ENCODE measurements at regions of chr12 and their contacts with region 1.

Region 1: DNA sequence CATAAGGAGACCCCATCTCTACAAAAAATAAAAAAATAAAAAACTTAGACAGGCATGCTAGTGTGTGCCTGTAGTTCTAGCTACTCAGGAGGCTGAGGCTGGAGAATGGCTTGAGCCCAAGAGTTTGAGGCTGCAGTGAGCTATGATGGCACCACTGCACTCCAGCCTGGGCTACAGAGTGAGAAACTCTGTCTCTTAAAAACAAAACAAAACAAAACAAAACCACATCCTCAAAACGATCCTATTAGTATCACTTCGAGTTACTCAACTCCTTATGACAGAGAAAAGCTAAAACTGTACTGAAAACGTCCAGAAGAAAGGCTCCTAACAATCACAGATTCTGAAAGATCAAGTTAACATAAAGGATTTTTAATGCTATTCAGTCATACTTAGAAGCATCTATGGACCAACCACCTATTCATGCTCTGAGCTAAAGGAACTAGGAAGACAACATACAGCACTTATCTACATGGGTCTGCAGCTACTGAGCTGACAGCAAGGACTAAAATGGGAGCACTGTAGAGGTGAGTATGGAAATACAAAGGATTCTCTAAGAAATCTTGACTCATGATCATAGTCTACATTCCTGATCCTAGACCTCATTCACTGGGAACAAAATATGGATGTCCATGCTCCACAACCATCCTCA is 75.3 kb upstream of the DUSP6 start:
- H3K4me3 Mint-ChIP-seq: no peak overlapping the region
- H3K27ac Mint-ChIP-seq: peak overlapping the region; percentile 58
- H3K4me1 Mint-ChIP-seq: peaks cover 38% of the 10 kb centered on the region
- H3K27me3 Mint-ChIP-seq: no peaks in the 10 kb centered on the region

Region 2: GRCh38 chr12:88677464-88677863 is 750.2 kb before region 1 on chr12:
- intact Hi-C with region 1: no loop called
- H3K4me3 Mint-ChIP-seq: no peak overlapping the region
- H3K27ac Mint-ChIP-seq: no peak overlapping the region
- H3K4me1 Mint-ChIP-seq: no peaks in the 10 kb centered on the region
- H3K27me3 Mint-ChIP-seq: no peaks in the 10 kb centered on the region

Region 3: DNA sequence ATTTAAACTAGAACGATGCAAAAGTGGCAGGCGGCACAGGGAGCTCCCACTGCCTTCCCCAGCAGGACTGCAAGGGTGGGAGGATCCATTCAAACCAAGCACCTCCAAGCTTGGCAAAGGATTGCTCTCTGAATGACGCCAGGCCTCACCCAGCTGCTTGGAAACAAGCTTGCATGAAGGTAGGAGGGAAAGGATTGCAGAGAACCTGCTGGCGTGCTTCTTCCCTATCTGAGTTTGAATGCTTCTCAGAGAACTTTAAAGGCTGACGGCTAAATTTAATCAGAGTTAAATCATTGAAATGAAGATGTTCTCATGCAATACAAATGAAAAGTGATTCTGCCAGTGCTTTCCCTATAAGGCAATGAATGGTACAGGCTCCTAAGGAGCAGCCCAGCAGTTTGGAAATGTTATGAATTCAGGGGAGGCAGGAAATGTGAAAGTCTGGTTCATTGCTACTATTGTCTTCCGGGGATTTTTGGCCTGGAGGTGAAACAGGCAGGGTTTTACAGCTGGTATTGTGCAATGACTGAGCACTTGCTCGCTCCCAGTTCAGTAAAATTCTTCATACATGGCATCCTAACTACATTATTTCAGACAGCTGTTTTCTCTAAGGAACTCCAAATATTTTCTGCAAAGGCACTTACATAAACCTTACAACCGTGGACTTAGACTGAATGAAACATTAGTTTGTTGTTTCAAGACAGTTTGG is 43.4 kb before region 1 on chr12:
- intact Hi-C with region 1: loop called (anchors 5 kb)
- H3K4me3 Mint-ChIP-seq: no peak overlapping the region
- H3K27ac Mint-ChIP-seq: no peak overlapping the region
- H3K4me1 Mint-ChIP-seq: peaks cover 46% of the 10 kb centered on the region
- H3K27me3 Mint-ChIP-seq: no peaks in the 10 kb centered on the region